ENCODE measurements at regions of chr10 and their contacts with region 1.

Region 1: DNA sequence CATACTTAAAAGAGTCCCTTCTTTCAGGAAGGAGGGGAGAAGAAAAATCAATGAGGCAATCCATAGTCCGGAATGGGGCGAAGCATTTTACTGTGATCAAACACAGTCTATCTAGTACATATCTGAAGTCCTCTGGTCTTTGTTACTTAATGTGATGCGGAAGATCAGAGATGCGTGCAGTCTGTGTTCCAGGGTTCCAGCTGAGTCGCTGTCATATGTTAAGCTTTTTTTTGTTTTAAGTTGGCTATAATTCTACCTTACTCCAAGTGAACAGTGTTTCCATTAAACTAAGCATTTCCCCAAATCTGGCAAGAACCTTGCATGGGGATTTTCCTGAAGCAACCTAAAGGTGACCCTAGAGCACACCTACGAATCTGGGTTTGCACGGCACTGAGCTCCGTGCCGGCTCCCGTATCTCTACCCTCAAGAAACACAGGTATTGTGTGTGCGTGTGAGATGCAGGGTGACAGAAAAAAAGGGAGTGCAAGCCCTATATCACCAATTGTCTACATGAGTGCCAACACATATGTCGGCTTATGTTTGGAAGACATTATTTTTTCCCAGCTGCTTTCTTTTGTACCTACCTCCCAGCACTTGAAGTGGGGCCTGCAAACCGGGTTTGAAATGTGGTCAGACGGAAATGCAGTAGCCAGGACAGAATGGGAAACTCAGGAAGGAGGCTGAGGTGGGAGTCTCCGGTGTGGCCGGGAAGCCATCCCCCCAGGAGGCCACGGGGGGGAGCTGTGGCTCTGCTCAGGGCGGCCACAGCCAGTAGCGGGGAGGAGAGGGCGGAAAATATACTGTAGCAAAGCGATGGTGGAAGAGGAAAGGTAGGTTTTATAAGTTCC is 435.8 kb upstream of the MGMT start:
- ATAC-seq: peak; percentile 85 to 99 (median 92)
- H3K4me3 ChIP-seq: no peak overlapping the region
- H3K27ac ChIP-seq: no peak overlapping the region
- H3K4me1 ChIP-seq: peaks cover 27 to 75% of the 10 kb centered on the region in 2 donors

Region 2: DNA sequence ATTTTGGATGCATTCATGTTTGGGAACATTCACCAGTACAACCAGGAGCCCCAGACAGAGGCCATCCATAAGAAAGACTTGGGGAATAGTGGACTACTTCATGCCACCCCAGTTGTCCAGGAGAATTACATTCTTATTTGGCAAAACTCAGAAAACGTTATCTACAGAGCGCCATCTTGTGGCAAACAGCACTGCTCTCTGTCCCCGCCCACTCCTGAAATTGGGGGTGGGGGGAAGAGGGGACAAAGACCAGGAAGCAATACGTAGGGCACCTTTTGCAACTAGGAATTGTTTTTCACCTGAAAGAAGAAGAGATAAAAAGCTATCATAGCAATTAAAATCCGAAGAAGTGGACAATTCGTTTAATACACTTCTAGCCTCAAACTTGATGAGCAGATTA is 301.3 kb after region 1 on chr10:
- in situ Hi-C with region 1: loop called in 2 of 9 experiments (anchors 25 kb)
- ATAC-seq: peak in 1 of 8 experiments; percentile 64
- H3K4me3 ChIP-seq: no peak overlapping the region
- H3K27ac ChIP-seq: no peak overlapping the region
- H3K4me1 ChIP-seq: peaks cover 19 to 48% of the 10 kb centered on the region in 2 donors